Naive thymus-derived CD4-positive, alpha-beta T cell (primary cell): ENCODE measurements at regions of chr2 and their contacts with region 1.

Region 1: DNA sequence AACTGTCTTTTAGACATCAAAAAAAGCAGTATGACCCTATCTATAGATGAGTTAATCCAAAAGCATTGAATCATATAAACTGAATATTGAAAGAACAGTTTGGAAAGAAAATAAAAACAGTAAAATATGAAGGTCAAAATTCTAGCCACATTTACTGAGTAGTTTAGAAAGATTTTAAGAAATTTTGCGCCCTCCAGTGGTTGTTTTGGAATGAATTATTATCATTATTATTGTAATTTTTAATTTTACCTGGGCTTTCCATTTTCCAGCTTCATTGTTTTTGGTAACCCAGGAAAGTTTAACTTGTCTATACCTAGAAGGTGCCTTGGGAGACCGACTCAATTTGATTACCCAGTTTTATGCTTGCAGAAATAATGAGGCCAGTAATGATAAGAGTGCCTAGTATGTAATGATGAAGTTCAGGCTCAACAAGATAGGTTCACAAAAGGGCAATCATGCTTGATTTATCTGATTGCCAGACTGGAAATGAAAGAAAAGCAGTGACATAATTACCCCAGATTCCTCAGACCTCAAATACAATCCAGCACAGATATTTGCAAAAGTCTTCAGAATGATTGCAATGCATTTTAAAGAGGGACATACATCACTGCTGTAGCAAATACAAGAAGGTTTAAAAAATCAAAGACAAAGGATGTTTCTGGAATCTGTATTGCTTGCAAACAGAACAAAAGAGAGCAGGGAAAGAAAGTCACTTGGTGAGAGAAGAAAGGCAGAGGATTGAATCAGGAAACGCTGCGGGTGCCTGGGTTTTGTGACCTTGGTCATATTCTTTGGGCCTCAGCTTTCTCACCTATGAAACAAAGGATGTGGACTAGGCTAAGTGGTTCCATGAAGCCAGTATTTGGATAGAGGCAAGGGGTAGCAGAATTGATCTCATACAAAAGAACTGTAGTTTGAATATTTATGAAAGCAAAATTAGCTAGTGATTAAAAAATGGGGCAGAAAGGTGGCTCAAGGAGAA is 153.8 kb downstream of the MAP2 start:
- DNase-seq: no peak
- ATAC-seq: no peak
- H3K4me3 ChIP-seq: no peak overlapping the region
- H3K4me3 Mint-ChIP-seq: no peak overlapping the region
- H3K27ac ChIP-seq: no peak overlapping the region
- H3K27ac Mint-ChIP-seq: no peak overlapping the region
- H3K4me1 ChIP-seq: no peaks in the 10 kb centered on the region
- H3K4me1 Mint-ChIP-seq: peaks cover 0 to 11% (median 4%) of the 10 kb centered on the region in 7 donors
- H3K27me3 ChIP-seq: no peaks in the 10 kb centered on the region
- H3K27me3 Mint-ChIP-seq: peaks cover 0 to 10% (median 4%) of the 10 kb centered on the region in 5 donors

Region 2: DNA sequence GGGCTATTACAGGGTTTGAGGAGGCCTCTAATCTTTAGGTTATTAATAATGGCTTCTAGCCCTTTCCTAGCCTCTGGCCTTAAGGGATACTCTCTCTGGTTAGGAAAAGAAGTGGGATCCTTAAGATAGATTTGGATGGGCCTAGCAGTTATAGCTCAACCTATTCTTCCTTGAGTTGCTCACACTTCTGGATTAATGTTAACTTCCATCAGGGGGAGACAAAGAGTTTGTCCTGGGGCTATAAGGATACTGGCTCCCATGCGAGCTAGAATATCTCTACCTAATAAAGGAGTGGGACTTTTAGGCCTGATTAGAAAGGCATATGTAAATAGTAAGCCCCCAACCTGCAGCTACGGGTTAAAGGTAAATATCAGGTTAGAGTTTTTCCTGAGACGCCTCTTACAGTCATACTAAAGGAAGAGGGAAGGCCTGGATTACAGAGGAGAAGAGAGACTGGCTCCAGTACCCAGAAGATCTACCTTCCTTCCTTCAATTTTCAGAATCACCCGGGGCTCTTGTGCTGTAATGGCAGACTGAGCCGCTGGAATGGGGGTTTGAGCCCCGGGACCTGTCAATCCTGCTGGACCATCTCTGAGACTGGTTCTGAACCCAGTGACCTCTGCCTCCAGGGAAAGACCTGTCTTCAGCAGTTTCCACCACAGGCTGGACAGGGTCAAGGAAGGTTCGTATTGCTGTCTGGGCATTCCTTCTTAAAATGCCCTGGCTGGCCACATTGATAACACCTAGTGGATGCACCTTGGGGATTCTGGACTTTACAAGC is 1185.2 kb before region 1 on chr2:
- CTCF ChIA-PET with region 1: no interaction called
- POLR2A ChIA-PET with region 1: no interaction called
- intact Hi-C with region 1: loop called in 1 of 2 experiments (anchors 1 kb)
- DNase-seq: no peak
- ATAC-seq: no peak
- H3K4me3 ChIP-seq: no peak overlapping the region
- H3K4me3 Mint-ChIP-seq: no peak overlapping the region
- H3K27ac ChIP-seq: no peak overlapping the region
- H3K27ac Mint-ChIP-seq: no peak overlapping the region
- H3K4me1 ChIP-seq: no peaks in the 10 kb centered on the region
- H3K4me1 Mint-ChIP-seq: no peaks in the 10 kb centered on the region
- H3K27me3 ChIP-seq: no peaks in the 10 kb centered on the region
- H3K27me3 Mint-ChIP-seq: peaks cover 5 to 22% (median 11%) of the 10 kb centered on the region in 5 donors

Region 3: DNA sequence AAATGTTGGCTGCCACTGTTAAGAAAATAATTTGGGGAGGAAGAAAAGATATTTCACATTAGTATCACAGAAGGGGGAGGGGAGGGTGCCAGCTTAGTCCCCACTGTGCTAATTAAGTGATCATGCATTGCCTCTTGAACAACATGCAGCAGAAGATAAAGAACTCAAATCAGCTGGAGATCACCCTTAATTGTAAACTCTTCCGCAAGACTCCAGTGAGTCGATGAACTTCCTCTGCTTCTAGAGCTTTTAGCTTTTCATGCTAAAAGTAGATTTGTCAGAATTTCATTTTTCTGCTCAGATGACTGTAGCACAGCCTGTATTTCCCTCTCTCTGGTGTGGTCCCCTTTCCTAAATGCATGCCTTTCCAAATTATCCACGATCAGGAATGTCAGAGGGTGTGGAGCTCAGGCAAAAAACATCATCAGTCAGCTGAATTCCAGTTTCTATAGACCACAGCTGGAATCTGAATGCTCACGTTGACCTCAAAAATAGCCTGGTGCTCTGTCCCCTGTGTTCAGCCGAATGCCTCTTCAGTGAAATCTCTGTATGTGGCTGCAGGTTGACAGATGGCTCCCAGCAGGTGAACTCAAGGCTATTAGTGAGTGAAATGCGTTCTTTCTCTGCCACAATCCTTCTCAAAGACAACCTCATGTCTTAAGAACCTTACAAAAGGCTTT is 37.2 kb after region 1 on chr2:
- CTCF ChIA-PET with region 1: no interaction called
- POLR2A ChIA-PET with region 1: no interaction called
- intact Hi-C with region 1: no loop called
- DNase-seq: no peak
- ATAC-seq: no peak
- H3K4me3 ChIP-seq: no peak overlapping the region
- H3K4me3 Mint-ChIP-seq: no peak overlapping the region
- H3K27ac ChIP-seq: no peak overlapping the region
- H3K27ac Mint-ChIP-seq: no peak overlapping the region
- H3K4me1 ChIP-seq: no peaks in the 10 kb centered on the region
- H3K4me1 Mint-ChIP-seq: no peaks in the 10 kb centered on the region
- H3K27me3 ChIP-seq: no peaks in the 10 kb centered on the region
- H3K27me3 Mint-ChIP-seq: peaks cover 0 to 11% (median 5%) of the 10 kb centered on the region in 5 donors

Region 4: GRCh38 chr2:210663631-210664089 is 1086.0 kb after region 1 on chr2:
- CTCF ChIA-PET with region 1: no interaction called
- POLR2A ChIA-PET with region 1: no interaction called
- intact Hi-C with region 1: no loop called
- DNase-seq: no peak
- ATAC-seq: no peak
- H3K4me3 ChIP-seq: no peak overlapping the region
- H3K4me3 Mint-ChIP-seq: no peak overlapping the region
- H3K27ac ChIP-seq: no peak overlapping the region
- H3K27ac Mint-ChIP-seq: no peak overlapping the region
- H3K4me1 ChIP-seq: no peaks in the 10 kb centered on the region
- H3K4me1 Mint-ChIP-seq: no peaks in the 10 kb centered on the region
- H3K27me3 ChIP-seq: no peaks in the 10 kb centered on the region
- H3K27me3 Mint-ChIP-seq: peaks cover 0 to 3% (median 0%) of the 10 kb centered on the region in 5 donors